ENCODE measurements at regions of chr13 and their contacts with region 1.

Region 1: DNA sequence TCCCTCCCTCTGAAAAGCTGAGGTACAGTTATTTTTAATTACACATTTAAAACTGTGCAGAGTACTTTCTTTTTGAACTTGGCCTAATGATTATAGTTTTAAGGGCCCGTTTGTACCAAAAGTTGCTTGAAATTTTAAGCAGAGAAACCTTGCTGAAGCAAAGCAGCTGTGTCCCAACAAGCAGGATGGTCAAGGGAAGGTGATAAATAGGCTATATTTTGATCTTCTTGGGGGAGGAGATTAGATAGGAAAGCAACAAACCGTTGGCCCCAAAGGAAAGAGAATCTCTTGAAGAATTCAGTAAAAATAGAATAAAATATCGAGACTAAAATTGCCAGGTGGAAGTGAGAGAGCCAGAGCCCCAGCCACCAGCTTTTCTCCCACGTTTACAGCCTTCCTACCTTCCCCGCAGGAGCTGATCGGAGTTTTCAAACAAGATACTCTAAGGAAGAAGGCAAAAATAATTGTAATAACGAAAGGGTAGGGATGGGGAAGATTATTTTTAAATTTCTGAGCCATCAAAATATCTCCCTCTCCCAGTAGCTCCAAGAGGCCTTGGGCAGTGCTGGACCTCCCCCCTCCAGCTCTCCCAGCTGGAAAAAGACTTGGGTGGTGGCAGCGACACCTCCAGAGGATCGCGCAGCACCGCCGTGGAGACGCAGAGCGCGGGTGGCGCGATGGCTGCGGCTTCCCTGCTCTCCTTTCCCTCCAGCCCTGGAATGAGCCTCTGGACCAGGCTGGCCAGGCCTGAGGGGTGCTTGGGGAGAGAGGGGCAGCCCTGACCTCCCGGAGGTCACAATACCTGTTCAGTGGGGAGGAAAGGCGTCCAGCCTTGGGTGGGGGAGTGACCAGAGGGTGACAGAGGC is 5.8 kb downstream of the ZIC2 start:
- DNase-seq: no peak
- ATAC-seq: no peak
- H3K4me3 Mint-ChIP-seq: no peak overlapping the region
- H3K27ac Mint-ChIP-seq: no peak overlapping the region
- H3K4me1 Mint-ChIP-seq: peaks cover 11% of the 10 kb centered on the region
- H3K27me3 Mint-ChIP-seq: peaks cover 76% of the 10 kb centered on the region
- CTCF ChIP-seq: no peak

Region 2: GRCh38 chr13:99971576-99972189 is 15.7 kb before region 1 on chr13 and contains the start of gene ZIC5:
- CTCF ChIA-PET with region 1: no interaction called
- POLR2A ChIA-PET with region 1: no interaction called
- intact Hi-C with region 1: loop called (anchors 2 kb)
- DNase-seq: no peak
- ATAC-seq: no peak
- H3K4me3 Mint-ChIP-seq: peak within 1 kb of the TSS; percentile 15
- H3K27ac Mint-ChIP-seq: peak within 1 kb of the TSS; percentile 24
- H3K4me1 Mint-ChIP-seq: peaks cover 19% of the 10 kb centered on the region
- H3K27me3 Mint-ChIP-seq: peaks cover 58% of the 10 kb centered on the region
- CTCF ChIP-seq: no peak
- total RNA-seq, gene ZIC5: not detected in 2 replicates